Calu3 (cell line): ENCODE measurements at regions of chr6 and their contacts with region 1.

Region 1: GRCh38 chr6:13194852-13195251 is 133.5 kb downstream of the TBC1D7 start:
- DNase-seq: peak; percentile 43
- H3K4me3 Mint-ChIP-seq: no peak overlapping the region
- H3K27ac Mint-ChIP-seq: no peak overlapping the region
- H3K4me1 Mint-ChIP-seq: no peaks in the 10 kb centered on the region
- H3K27me3 Mint-ChIP-seq: peaks cover 39% of the 10 kb centered on the region
- CTCF ChIP-seq: peak; percentile 30

Region 2: GRCh38 chr6:13281701-13282100 is 86.8 kb after region 1 on chr6:
- CTCF ChIA-PET with region 1: no interaction called
- intact Hi-C with region 1: no loop called
- DNase-seq: no peak
- H3K4me3 Mint-ChIP-seq: no peak overlapping the region
- H3K27ac Mint-ChIP-seq: no peak overlapping the region
- H3K4me1 Mint-ChIP-seq: no peaks in the 10 kb centered on the region
- H3K27me3 Mint-ChIP-seq: no peaks in the 10 kb centered on the region
- CTCF ChIP-seq: no peak

Region 3: GRCh38 chr6:13422681-13423221 is 227.9 kb after region 1 on chr6:
- CTCF ChIA-PET with region 1: no interaction called
- intact Hi-C with region 1: no loop called
- DNase-seq: no peak
- H3K4me3 Mint-ChIP-seq: no peak overlapping the region
- H3K27ac Mint-ChIP-seq: no peak overlapping the region
- H3K4me1 Mint-ChIP-seq: peaks cover 45% of the 10 kb centered on the region
- H3K27me3 Mint-ChIP-seq: no peaks in the 10 kb centered on the region
- CTCF ChIP-seq: no peak

Region 4: DNA sequence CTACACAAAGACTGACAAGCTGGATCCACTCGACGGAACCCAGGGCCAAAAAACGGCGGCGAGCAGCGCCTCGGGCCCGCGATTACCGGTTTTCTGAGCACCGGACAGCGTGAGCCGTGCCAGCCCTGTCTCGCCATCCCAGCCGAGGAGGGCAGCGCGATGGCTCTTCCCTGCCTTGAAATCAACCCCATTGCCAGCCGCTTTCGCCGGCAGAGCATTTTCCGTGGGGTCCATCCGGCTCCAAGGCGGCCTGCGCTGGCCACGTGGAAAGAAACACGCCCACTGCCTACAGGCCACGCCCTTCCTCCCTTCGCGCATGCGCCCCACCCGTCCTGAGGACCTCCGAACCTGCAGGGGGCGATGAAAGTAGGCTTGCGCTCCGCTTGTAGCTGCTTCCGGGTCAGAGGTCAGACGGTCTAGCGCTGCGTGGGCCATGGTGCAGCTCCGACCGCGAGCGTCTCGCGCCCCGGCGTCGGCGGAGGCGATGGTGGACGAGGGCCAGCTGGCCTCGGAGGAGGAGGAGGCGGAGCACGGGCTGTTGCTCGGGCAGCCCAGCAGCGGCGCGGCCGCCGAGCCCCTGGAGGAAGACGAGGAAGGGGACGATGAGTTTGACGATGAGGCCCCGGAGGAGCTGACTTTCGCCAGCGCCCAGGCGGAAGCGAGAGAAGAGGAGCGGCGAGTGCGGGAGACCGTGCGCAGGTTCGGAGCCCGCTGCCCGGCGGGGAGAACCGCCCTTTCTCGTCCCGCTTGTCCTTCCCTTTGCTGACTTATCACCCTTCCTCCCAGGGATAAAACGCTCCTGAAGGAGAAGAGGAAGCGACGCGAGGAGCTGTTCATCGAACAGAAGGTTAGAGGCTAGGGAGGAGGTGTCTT is 420.3 kb after region 1 on chr6 and contains the start of gene NOL7:
- CTCF ChIA-PET with region 1: no interaction called
- intact Hi-C with region 1: loop called (anchors 5 kb)
- DNase-seq: peak; percentile 95
- H3K4me3 Mint-ChIP-seq: peak within 1 kb of the TSS; percentile 96
- H3K27ac Mint-ChIP-seq: peak within 1 kb of the TSS; percentile 84
- H3K4me1 Mint-ChIP-seq: peaks cover 12% of the 10 kb centered on the region
- H3K27me3 Mint-ChIP-seq: no peaks in the 10 kb centered on the region
- CTCF ChIP-seq: peak; percentile 62
- total RNA-seq, gene NOL7: 44.5 and 44.7 TPM in 2 replicates